ENCODE measurements at regions of chr12 and their contacts with region 1.

Region 1: GRCh38 chr12:40946612-40947194 is 241.4 kb upstream of the PDZRN4 start:
- DNase-seq: peak; percentile 22
- H3K4me3 Mint-ChIP-seq: no peak overlapping the region
- H3K27ac Mint-ChIP-seq: no peak overlapping the region
- H3K4me1 Mint-ChIP-seq: no peaks in the 10 kb centered on the region
- H3K27me3 Mint-ChIP-seq: peaks cover 50% of the 10 kb centered on the region
- CTCF ChIP-seq: peak; percentile 49

Region 2: DNA sequence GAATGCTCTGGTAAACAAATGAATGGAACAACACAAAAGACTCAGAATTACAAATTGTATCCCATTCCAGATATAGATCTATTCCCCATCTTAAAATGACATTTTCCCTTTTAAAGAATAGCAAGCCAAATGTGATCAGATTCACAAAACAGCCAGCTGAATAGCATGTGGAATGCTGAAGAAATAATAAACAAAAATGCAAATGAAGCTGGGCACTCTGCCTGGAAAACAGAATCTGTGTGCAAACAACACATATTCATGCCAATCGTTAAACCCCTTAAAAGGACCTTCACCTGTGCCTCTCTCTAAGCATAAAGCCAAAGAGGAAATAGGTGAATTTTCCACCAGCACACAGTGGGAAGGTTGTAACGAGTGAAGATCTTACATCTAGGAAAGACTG is 173.5 kb after region 1 on chr12:
- CTCF ChIA-PET with region 1: no interaction called
- POLR2A ChIA-PET with region 1: no interaction called
- intact Hi-C with region 1: no loop called
- DNase-seq: no peak
- H3K4me3 Mint-ChIP-seq: no peak overlapping the region
- H3K27ac Mint-ChIP-seq: no peak overlapping the region
- H3K4me1 Mint-ChIP-seq: no peaks in the 10 kb centered on the region
- H3K27me3 Mint-ChIP-seq: peaks cover 14% of the 10 kb centered on the region
- CTCF ChIP-seq: no peak

Region 3: DNA sequence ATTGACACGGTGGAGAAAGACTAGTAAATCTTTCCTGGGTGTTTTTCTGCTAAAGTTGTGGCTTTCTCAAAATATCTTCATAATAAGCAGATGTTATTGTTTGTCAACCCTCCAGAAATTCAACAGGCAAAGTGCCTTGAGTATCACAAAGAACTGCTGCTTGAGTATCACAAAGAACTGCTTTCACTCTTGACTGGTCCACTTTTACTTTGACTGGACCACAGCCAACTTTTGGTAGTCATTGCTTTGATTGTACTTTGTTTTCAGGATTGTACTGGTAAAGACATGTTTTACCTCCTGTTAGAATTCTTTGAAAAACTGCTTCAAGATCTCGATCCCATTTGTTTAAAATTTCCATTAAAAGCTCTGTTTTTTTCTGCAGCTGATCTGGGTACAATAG is 304.0 kb after region 1 on chr12:
- CTCF ChIA-PET with region 1: no interaction called
- POLR2A ChIA-PET with region 1: no interaction called
- intact Hi-C with region 1: loop called (anchors 10 kb)
- DNase-seq: peak; percentile 33
- H3K4me3 Mint-ChIP-seq: no peak overlapping the region
- H3K27ac Mint-ChIP-seq: no peak overlapping the region
- H3K4me1 Mint-ChIP-seq: no peaks in the 10 kb centered on the region
- H3K27me3 Mint-ChIP-seq: peaks cover 46% of the 10 kb centered on the region
- CTCF ChIP-seq: no peak

Region 4: GRCh38 chr12:41293011-41293410 is 346.3 kb after region 1 on chr12:
- CTCF ChIA-PET with region 1: no interaction called
- POLR2A ChIA-PET with region 1: no interaction called
- intact Hi-C with region 1: no loop called
- DNase-seq: peak; percentile 40
- H3K4me3 Mint-ChIP-seq: peak overlapping the region; percentile 40
- H3K27ac Mint-ChIP-seq: no peak overlapping the region
- H3K4me1 Mint-ChIP-seq: peaks cover 16% of the 10 kb centered on the region
- H3K27me3 Mint-ChIP-seq: no peaks in the 10 kb centered on the region
- CTCF ChIP-seq: no peak

Region 5: DNA sequence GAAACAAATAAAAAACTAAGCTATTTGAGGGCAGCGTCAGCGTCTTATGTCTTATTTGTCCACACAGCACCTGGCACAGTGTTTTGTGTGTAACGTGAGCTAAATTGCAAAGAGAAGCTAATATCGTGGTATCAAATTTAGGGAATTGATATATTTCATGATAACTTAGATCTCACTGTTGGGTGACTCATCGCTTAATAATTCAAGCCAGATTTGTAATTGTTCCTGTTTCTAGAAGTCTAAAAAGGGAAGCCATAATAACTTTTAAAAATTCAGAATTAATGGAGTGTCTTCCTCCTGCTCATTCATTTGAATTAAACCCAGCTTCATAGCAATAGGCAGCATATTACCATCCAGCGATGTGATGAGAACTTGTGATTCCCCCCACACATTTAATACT is 456.1 kb after region 1 on chr12:
- CTCF ChIA-PET with region 1: no interaction called
- POLR2A ChIA-PET with region 1: no interaction called
- intact Hi-C with region 1: no loop called
- DNase-seq: no peak
- H3K4me3 Mint-ChIP-seq: no peak overlapping the region
- H3K27ac Mint-ChIP-seq: no peak overlapping the region
- H3K4me1 Mint-ChIP-seq: peaks cover 5% of the 10 kb centered on the region
- H3K27me3 Mint-ChIP-seq: peaks cover 14% of the 10 kb centered on the region
- CTCF ChIP-seq: no peak

Region 6: DNA sequence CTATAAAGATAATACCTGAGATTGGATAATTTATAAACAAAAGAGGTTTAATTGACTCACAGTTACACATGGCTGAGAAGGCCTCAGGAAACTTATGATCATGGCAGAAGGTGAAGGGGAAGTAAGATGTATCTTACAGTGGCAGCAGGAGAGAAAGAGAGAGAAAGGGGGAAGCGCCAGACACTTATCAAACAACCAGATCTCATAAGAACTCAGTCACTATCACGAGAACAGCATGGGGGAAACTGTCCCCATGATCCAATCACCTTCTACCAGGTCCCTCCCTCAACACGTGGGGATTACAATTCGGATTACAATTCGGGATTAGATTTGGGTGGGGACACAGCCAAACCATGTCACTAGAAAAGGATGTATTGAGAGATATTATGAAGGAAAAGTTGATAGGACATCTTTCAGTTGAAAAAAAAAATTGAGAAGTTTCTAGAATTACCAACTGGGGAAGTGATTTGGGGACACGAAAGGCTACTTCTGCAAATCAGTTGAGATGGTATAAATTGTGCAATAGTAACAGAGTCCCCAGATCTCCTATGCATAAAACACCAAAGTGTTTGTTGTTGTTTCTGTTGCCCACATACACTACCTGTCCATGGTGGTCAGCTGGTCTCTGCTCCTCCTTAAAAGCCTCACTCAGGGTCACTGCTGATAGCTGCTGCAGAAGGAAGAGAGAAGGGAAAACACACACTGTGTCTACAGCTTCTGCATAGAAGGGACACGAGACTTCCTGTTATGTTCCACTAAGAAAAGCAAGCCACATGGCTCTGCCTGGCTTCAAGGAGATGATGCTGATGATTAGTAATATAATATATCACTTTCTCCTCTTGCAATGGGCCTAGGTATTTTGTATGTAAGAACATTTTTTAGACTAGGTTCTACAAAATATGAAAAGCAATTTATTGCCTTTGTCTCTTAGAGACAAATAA is 707.0 kb after region 1 on chr12:
- CTCF ChIA-PET with region 1: no interaction called
- POLR2A ChIA-PET with region 1: no interaction called
- intact Hi-C with region 1: no loop called
- DNase-seq: no peak
- H3K4me3 Mint-ChIP-seq: no peak overlapping the region
- H3K27ac Mint-ChIP-seq: no peak overlapping the region
- H3K4me1 Mint-ChIP-seq: peaks cover 6% of the 10 kb centered on the region
- H3K27me3 Mint-ChIP-seq: peaks cover 25% of the 10 kb centered on the region
- CTCF ChIP-seq: no peak

Measured in MCF 10A (cell line).